Naive thymus-derived CD4-positive, alpha-beta T cell (primary cell): ENCODE measurements at regions of chr9 and their contacts with region 1.

Region 1: GRCh38 chr9:113446323-113446740 is 17.2 kb upstream of the RGS3 start:
- DNase-seq: peak in 6 of 9 donors; percentile 20 to 51 (median 42)
- ATAC-seq: no peak
- H3K4me3 ChIP-seq: no peak overlapping the region
- H3K4me3 Mint-ChIP-seq: no peak overlapping the region
- H3K27ac ChIP-seq: no peak overlapping the region
- H3K27ac Mint-ChIP-seq: no peak overlapping the region
- H3K4me1 ChIP-seq: no peaks in the 10 kb centered on the region
- H3K4me1 Mint-ChIP-seq: peaks cover 0 to 3% (median 0%) of the 10 kb centered on the region in 7 donors
- H3K27me3 ChIP-seq: no peaks in the 10 kb centered on the region
- H3K27me3 Mint-ChIP-seq: no peaks in the 10 kb centered on the region

Region 2: GRCh38 chr9:113317777-113318176 is 128.6 kb before region 1 on chr9:
- CTCF ChIA-PET with region 1: no interaction called
- POLR2A ChIA-PET with region 1: no interaction called
- intact Hi-C with region 1: no loop called
- DNase-seq: no peak
- ATAC-seq: no peak
- H3K4me3 ChIP-seq: no peak overlapping the region
- H3K4me3 Mint-ChIP-seq: no peak overlapping the region
- H3K27ac ChIP-seq: no peak overlapping the region
- H3K27ac Mint-ChIP-seq: no peak overlapping the region
- H3K4me1 ChIP-seq: no peaks in the 10 kb centered on the region
- H3K4me1 Mint-ChIP-seq: no peaks in the 10 kb centered on the region
- H3K27me3 ChIP-seq: no peaks in the 10 kb centered on the region
- H3K27me3 Mint-ChIP-seq: no peaks in the 10 kb centered on the region

Region 3: GRCh38 chr9:113591001-113591898 is 144.9 kb after region 1 on chr9:
- CTCF ChIA-PET with region 1: interaction called, 80 read pairs
- POLR2A ChIA-PET with region 1: interaction called, 3 read pairs
- intact Hi-C with region 1: loop called (anchors 2 kb)
- DNase-seq: peak in 6 of 9 donors; percentile 30 to 75 (median 38)
- ATAC-seq: peak; percentile 58
- H3K4me3 ChIP-seq: no peak overlapping the region
- H3K4me3 Mint-ChIP-seq: no peak overlapping the region
- H3K27ac ChIP-seq: no peak overlapping the region
- H3K27ac Mint-ChIP-seq: peak overlapping the region in 1 of 9 donors; percentile 45
- H3K4me1 ChIP-seq: peaks cover 5 to 8% of the 10 kb centered on the region in 2 donors
- H3K4me1 Mint-ChIP-seq: peaks cover 20 to 47% (median 23%) of the 10 kb centered on the region in 7 donors
- H3K27me3 ChIP-seq: no peaks in the 10 kb centered on the region
- H3K27me3 Mint-ChIP-seq: no peaks in the 10 kb centered on the region